ENCODE measurements at regions of chr6 and their contacts with region 1.

Region 1: DNA sequence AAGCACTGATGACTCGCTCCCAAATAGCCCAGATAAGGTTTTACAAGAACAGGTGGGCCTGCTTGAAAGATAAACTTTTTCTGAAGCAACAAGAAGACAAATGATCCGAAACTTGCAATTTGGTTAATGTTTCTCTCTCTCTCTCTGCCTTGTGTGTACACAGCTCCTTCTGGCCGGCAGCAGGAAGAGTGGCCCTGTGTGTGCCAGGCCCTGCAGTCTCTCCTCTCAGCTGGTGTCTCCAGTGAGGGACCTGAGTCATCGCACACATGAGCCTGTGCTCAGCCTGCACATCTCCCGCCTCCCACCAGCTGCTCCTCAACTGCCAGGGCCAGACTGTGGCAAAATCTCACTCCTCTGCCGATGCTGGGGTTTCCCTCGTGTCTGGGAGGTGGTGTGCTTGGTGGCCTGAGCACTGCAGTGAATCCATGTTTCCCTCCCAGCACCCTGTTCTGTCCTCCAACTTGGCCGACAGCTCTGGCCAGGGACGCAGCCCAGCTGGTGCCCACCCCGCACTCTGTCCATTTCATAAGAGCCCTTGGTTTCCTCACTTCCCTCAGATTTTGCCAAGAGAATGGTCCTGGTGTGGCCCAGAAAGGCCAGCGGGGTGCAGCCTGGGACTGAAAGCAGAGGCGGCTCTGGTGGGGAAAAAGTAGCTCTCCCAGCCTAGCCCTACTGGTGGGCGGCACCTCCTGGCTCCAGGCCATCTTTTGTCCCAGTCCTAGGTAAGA is 49.4 kb downstream of the ERMARD start:
- DNase-seq: peak in 9 of 10 donors; percentile 37 to 93 (median 78)
- H3K4me3 ChIP-seq: peak overlapping the region in 1 of 59 donors; percentile 1
- H3K27ac ChIP-seq: peak overlapping the region in 50 of 59 donors; percentile 14 to 87 (median 70)
- H3K27me3 ChIP-seq: peaks cover 0 to 16% (median 0%) of the 10 kb centered on the region in 45 donors
- CTCF ChIP-seq: peak in 2 of 56 donors; percentile 6 to 7

Region 2: DNA sequence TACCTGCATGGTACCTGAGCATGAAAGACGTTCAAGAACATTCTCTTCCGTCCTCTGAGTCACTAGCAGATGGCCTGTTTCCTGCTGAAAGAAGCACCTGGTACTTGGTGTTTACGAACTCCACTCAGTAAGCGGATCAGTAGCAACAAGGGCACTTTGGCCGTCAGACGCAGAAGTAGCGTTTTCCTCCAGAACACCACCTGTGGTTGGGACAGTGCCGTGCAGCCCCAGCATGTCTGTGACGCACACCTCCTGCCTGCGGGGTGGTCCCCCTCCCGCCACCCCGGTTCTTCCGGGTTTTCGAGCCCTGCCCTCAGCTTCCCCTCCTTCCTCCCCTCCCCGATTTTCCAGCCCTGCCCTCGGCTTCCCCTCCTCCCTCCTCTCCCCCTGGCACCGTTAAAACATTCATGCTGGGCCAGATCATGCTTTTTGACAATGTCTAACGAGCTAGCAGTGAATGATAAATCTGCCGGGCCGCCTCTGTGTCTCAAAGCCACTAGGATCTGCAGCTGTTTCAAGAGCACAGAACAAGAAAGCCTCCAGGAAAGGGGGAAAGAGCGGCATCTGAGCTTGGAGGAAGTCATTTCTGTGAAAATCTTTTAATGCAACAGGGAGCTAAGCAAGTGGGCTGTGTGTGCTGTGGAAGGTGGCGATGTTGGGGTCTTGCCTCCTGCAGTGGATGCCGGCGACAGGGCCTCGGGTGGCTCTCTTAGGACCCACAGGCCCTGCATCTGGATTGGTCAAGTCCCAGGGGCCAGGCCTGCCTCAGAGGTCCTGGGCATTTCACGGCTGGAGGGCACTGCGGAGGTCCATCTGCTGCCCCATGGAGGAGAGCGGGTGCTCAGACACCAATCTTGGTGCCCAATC is 158.5 kb after region 1 on chr6:
- intact Hi-C with region 1: loop called in 1 of 2 experiments (anchors 10 kb)
- DNase-seq: peak in 7 of 10 donors; percentile 5 to 35 (median 16)
- H3K4me3 ChIP-seq: no peak overlapping the region
- H3K27ac ChIP-seq: no peak overlapping the region
- H3K27me3 ChIP-seq: peaks cover 0 to 15% (median 0%) of the 10 kb centered on the region in 45 donors
- CTCF ChIP-seq: no peak